ENCODE measurements at regions of chr1 and their contacts with region 1.

Region 1: DNA sequence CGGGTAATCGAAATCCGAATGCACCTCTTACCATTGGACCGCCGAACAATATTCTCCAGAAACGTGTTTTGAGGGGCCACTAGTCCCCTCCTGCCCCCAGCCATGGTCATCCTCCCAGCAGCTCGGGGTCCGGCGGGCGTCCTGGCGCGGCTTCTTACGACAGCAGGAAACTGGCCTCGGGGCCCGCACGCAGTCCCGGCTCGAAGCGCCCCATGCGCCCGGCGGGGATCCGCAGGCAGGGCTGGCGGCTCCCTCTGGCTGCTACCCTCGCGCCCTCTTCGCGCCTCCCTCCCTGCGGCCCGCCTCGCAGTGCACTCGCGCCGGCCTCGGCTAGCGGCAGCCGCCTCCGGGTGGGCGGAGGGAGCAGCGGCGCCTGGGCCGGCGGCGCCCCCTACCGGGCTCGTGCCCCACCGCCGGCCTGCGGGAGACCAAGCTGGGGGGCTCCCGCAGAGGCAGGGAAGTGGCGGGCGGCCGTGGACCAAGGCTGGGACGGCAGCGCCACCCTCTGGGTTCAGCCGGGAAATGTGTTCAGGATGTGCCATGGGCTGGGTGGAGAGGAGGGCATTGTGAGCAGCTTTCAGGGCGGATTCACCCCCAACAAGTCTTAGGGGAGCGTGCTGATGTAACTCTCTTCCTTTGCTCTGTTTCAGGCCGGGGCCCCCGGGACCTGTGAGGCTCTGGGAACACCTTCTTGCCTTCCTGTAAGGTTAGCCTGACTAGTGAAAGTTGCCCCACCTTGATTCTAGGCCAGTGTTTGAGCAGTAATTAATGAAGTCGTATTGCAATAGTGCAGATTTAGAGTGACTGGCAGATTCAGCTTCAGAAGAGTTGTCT is at the start of gene KCNH1:
- DNase-seq: peak; percentile 69
- ATAC-seq: peak; percentile 96
- H3K4me3 ChIP-seq: peak within 1 kb of the TSS; percentile 58
- H3K27ac ChIP-seq: no peak within 1 kb of the TSS
- H3K4me1 ChIP-seq: no peaks in the 10 kb centered on the region
- H3K27me3 ChIP-seq: peaks cover 8% of the 10 kb centered on the region
- CTCF ChIP-seq: peak; percentile 99
- POLR2A ChIP-seq: peak; percentile 45
- RAD21 ChIP-seq: peak; percentile 96
- total RNA-seq, gene KCNH1: 0.54 and 0.56 TPM in 2 replicates

Region 2: GRCh38 chr1:210407207-210407886 is 726.7 kb before region 1 on chr1:
- CTCF ChIA-PET with region 1: interaction called, 50 read pairs
- POLR2A ChIA-PET with region 1: interaction called, 4 read pairs
- dilution Hi-C with region 1: no loop called
- in situ Hi-C with region 1: loop called (anchors 5 kb)
- intact Hi-C with region 1: loop called (anchors 1 kb)
- DNase-seq: peak; percentile 56
- ATAC-seq: peak; percentile 95
- H3K4me3 ChIP-seq: no peak overlapping the region
- H3K27ac ChIP-seq: no peak overlapping the region
- H3K4me1 ChIP-seq: no peaks in the 10 kb centered on the region
- H3K27me3 ChIP-seq: no peaks in the 10 kb centered on the region
- CTCF ChIP-seq: peak; percentile 98
- POLR2A ChIP-seq: no peak
- RAD21 ChIP-seq: peak; percentile 94

Region 3: GRCh38 chr1:210584439-210585113 is 549.5 kb before region 1 on chr1:
- CTCF ChIA-PET with region 1: interaction called, 76 read pairs
- POLR2A ChIA-PET with region 1: no interaction called
- dilution Hi-C with region 1: no loop called
- in situ Hi-C with region 1: loop called (anchors 5 kb)
- intact Hi-C with region 1: loop called (anchors 1 kb)
- DNase-seq: peak; percentile 78
- ATAC-seq: peak; percentile 91
- H3K4me3 ChIP-seq: no peak overlapping the region
- H3K27ac ChIP-seq: no peak overlapping the region
- H3K4me1 ChIP-seq: peaks cover 3% of the 10 kb centered on the region; the same call in 1 of the 2 replicates
- H3K27me3 ChIP-seq: no peaks in the 10 kb centered on the region
- CTCF ChIP-seq: peak; percentile 92
- POLR2A ChIP-seq: no peak
- RAD21 ChIP-seq: peak; percentile 99

Region 4: DNA sequence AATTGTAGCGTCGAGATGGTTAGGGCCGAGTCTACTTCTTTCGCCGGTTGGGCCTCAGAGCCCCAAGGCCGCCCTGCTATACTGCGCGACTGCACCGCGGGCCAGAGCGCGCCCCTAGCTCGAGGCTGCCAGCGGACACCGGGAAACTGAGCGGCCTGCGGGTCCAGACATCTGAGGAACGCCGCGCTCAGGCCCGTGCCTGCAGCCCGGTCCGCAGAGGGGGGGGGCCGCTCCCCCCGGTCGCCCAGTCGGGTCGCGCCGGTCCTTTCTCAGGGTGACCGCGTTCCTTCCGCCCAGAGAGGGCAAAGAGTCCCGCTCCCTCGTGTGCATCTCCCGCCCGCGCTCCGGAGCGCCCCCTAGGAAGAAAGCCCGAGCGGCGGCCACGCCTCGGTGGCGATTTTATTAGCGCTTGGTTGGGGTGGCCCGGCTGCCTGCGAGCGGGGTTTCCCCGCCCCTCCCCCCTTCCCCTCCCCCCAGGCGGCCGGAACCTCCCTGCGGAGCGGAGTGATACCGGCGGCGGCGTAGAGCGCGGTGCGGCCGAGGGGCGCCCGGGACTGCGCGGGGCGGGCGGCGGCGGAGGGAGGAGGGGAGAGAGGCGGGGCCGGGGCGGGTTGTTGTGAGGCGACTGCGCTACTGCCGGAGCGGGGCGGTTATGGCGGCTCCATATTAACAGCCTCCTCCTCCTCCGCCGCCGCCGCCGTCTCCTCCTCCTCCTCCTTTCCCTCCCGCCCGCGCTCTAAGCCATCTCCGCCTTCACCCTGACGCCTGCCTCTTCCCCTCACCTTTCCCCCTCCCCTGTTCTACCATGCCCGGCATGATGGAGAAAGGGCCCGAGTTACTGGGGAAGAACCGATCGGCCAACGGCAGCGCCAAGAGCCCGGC is 124.9 kb after region 1 on chr1 and contains the start of gene RCOR3:
- CTCF ChIA-PET with region 1: interaction called, 4 read pairs
- POLR2A ChIA-PET with region 1: no interaction called
- dilution Hi-C with region 1: no loop called
- in situ Hi-C with region 1: no loop called
- intact Hi-C with region 1: loop called (anchors 1 kb)
- DNase-seq: peak; percentile 87
- ATAC-seq: peak; percentile 86
- H3K4me3 ChIP-seq: peak within 1 kb of the TSS; percentile 100
- H3K27ac ChIP-seq: peak within 1 kb of the TSS; percentile 100
- H3K4me1 ChIP-seq: peaks cover 2% of the 10 kb centered on the region; the same call in 1 of the 2 replicates
- H3K27me3 ChIP-seq: no peaks in the 10 kb centered on the region
- CTCF ChIP-seq: peak; percentile 56
- POLR2A ChIP-seq: no peak; the same call in 1 of the 2 replicates
- RAD21 ChIP-seq: no peak
- total RNA-seq, gene RCOR3: 8.1 and 11.9 TPM in 2 replicates

Region 5: GRCh38 chr1:211654838-211655787 is 521.1 kb after region 1 on chr1:
- CTCF ChIA-PET with region 1: no interaction called
- POLR2A ChIA-PET with region 1: no interaction called
- dilution Hi-C with region 1: no loop called
- in situ Hi-C with region 1: no loop called
- intact Hi-C with region 1: loop called (anchors 5 kb)
- DNase-seq: peak; percentile 84
- ATAC-seq: peak; percentile 98
- H3K4me3 ChIP-seq: no peak overlapping the region
- H3K27ac ChIP-seq: no peak overlapping the region
- H3K4me1 ChIP-seq: peaks cover 8% of the 10 kb centered on the region
- H3K27me3 ChIP-seq: no peaks in the 10 kb centered on the region
- CTCF ChIP-seq: peak; percentile 99
- POLR2A ChIP-seq: peak; percentile 61; the same call in 1 of the 2 replicates
- RAD21 ChIP-seq: peak; percentile 100